Posterior cingulate gyrus (tissue), 11 donors: ENCODE measurements at regions of chr5 and their contacts with region 1.

Region 1: GRCh38 chr5:53560506-53561191 is at the start of gene NDUFS4:
- DNase-seq: peak; percentile 76 to 96 (median 86)

Region 2: GRCh38 chr5:53478411-53479044 is 82.1 kb before region 1 on chr5:
- intact Hi-C with region 1: loop called (anchors 5 kb)
- DNase-seq: peak in 2 of 10 donors; percentile 10 to 70

Region 3: DNA sequence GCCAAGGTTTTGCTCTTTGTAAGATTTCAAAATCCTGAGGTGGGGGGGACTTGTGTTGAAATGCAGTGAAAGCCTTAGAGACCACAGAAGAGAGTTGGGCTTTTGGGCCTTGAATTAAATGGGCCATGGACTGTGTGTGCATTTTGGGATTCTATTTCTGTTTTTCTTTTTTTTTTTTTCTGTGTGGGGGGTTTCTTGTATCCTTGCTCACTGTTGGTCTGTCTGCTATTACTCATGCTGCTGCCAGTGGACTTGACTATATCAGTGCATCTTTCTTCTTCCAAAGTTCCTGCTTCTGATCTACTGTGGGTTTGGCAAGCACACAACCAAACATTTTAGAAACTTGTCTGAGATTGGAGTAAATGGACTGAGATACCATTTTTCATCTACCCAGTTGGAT is 404.8 kb after region 1 on chr5:
- intact Hi-C with region 1: no loop called
- DNase-seq: no peak